Gastrocnemius medialis (tissue), 4 donors: ENCODE measurements at regions of chr10 and their contacts with region 1.

Region 1: GRCh38 chr10:101141616-101142532 is 10.8 kb downstream of the TLX1 start:
- DNase-seq: peak; percentile 45 to 63
- ATAC-seq: peak; percentile 90 to 96
- H3K4me3 ChIP-seq: no peak overlapping the region
- H3K27ac ChIP-seq: no peak overlapping the region
- H3K4me1 ChIP-seq: peaks cover 0 to 8% of the 10 kb centered on the region in 2 donors
- H3K27me3 ChIP-seq: peaks cover 84 to 90% (median 87%) of the 10 kb centered on the region in 3 donors
- CTCF ChIP-seq: peak; percentile 80 to 97 (median 88)
- POLR2A ChIP-seq: no peak

Region 2: GRCh38 chr10:101042667-101043355 is 99.1 kb before region 1 on chr10:
- in situ Hi-C with region 1: loop called in 1 of 4 experiments (anchors 10 kb)
- intact Hi-C with region 1: no loop called
- DNase-seq: peak; percentile 89 to 94
- ATAC-seq: peak; percentile 88 to 91
- H3K4me3 ChIP-seq: peak overlapping the region; percentile 61 to 75 (median 64)
- H3K27ac ChIP-seq: peak overlapping the region; percentile 74 to 84 (median 79)
- H3K4me1 ChIP-seq: peaks cover 11 to 16% of the 10 kb centered on the region in 2 donors
- H3K27me3 ChIP-seq: peaks cover 7 to 12% (median 9%) of the 10 kb centered on the region in 3 donors
- CTCF ChIP-seq: no peak
- POLR2A ChIP-seq: peak; percentile 46 to 59

Region 3: DNA sequence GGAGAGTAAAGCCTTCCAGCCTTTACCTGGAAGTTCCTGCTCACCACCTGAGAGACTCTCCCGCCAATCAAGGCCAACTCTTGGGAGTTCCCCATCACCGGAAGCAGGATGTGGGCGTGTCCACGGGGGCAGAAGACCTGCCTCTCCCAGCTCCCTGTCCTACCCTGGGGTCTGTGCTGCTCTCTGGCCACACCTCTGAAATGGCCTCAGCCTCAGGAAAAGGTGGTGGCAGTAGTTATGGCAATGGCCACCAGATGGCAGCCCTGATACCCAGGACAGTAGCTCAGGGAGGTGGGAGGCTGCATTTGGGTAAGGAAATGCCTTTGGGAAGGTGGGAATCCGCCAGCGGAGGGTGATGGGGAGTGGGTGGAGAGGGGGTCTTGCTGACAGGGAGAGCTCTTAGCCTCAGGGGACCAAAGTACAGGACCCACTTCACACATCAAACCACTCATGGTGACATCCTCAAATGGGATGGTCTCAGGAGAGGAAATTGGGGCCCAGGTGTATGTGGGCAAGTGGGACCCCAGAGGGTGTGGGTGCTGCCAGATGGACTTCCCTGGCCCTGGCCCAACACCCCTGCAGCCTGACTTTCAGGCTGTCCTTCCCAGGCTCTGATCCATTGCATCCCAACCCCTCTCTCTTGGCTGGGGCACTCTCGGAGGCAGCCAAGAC is 46.2 kb before region 1 on chr10:
- in situ Hi-C with region 1: loop called in 2 of 4 experiments (anchors 5 kb)
- intact Hi-C with region 1: loop called (anchors 1 kb)
- DNase-seq: peak; percentile 9 to 51
- ATAC-seq: peak; percentile 54 to 79
- H3K4me3 ChIP-seq: no peak overlapping the region
- H3K27ac ChIP-seq: no peak overlapping the region
- H3K4me1 ChIP-seq: no peaks in the 10 kb centered on the region
- H3K27me3 ChIP-seq: peaks cover 7 to 32% (median 13%) of the 10 kb centered on the region in 3 donors
- CTCF ChIP-seq: peak; percentile 55 to 77 (median 69)
- POLR2A ChIP-seq: no peak